Esophagus muscularis mucosa (tissue), 4 donors: ENCODE measurements at regions of chr5 and their contacts with region 1.

Region 1: GRCh38 chr5:14144586-14145434 is 1.7 kb downstream of the TRIO start:
- DNase-seq: peak; percentile 93
- H3K4me3 ChIP-seq: peak overlapping the region; percentile 73 to 95 (median 78)
- H3K27ac ChIP-seq: peak overlapping the region; percentile 97 to 98 (median 98)
- H3K4me1 ChIP-seq: peaks cover 51 to 57% (median 55%) of the 10 kb centered on the region in 4 donors
- H3K27me3 ChIP-seq: no peaks in the 10 kb centered on the region
- CTCF ChIP-seq: peak in 1 of 3 experiments; percentile 5
- EP300 ChIP-seq: no peak
- POLR2A ChIP-seq: no peak

Region 2: DNA sequence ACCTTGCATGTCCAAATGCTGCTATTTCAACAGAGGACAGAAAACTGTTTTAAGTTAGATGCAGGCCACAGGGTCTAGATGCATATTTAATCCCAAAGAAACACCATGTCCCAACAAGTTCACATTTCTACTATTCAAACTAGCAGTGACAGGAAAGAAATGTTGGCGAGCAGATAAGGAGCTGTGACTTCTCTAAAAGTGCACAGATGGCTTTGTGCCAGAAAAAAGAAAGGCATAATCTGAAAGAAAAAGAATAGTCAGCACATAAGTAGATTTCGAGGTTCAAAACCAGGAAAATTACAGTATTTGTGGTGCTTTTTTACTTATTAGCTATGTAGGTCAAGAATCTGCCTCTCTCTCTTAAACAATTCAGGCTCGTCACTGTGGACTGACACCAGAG is 378.6 kb before region 1 on chr5:
- intact Hi-C with region 1: no loop called
- DNase-seq: no peak
- H3K4me3 ChIP-seq: no peak overlapping the region
- H3K27ac ChIP-seq: no peak overlapping the region
- H3K4me1 ChIP-seq: no peaks in the 10 kb centered on the region
- H3K27me3 ChIP-seq: no peaks in the 10 kb centered on the region
- CTCF ChIP-seq: no peak
- EP300 ChIP-seq: no peak
- POLR2A ChIP-seq: no peak

Region 3: DNA sequence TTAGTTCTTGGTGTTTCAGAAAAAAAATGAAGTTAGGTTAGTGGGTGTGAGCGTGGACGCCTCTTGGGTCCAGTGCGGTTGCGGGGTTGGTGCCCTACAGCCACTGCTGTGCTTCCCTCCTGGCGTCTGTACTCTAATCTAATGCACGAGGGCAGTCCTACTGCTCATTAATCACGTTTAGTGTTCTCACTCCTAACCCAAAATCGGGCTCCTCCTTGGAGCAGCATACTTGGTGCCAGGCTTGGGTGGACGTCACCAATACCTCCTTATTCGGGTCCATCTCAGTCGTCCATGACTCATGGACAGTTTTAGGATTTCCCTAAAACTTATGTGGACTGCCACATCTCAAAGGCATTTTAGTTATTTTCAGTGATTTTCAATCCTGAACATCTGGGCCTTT is 39.9 kb after region 1 on chr5:
- intact Hi-C with region 1: loop called (anchors 5 kb)
- DNase-seq: no peak
- H3K4me3 ChIP-seq: peak overlapping the region; percentile 40 to 49 (median 42)
- H3K27ac ChIP-seq: peak overlapping the region; percentile 89 to 92 (median 90)
- H3K4me1 ChIP-seq: peaks cover 78 to 93% (median 92%) of the 10 kb centered on the region in 4 donors
- H3K27me3 ChIP-seq: no peaks in the 10 kb centered on the region
- CTCF ChIP-seq: no peak
- EP300 ChIP-seq: no peak
- POLR2A ChIP-seq: no peak

Region 4: DNA sequence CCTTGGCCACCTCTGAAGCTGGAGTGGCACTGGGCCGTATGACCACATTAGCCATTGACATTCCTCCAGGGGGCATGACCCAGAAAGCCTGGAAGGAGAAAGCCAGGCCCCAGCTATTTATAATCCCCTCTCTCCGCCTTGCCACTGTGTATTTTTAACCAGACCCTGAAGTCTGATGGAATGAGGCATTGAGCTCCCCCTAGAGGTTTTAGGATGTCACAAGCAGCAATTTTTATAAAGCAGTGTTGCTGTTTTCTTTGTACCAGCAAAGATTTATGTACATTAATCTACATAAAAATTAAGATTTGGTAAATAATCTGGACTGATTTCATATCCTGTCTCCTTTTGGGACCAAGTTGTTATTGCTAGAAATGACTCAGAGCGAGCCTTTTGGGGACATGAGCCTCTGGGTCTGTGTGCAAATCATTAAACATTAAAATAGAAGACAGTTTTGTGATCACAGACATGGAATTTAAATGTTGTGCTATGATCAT is 125.4 kb after region 1 on chr5:
- intact Hi-C with region 1: loop called (anchors 2 kb)
- DNase-seq: no peak
- H3K4me3 ChIP-seq: no peak overlapping the region
- H3K27ac ChIP-seq: peak overlapping the region; percentile 70 to 76 (median 74)
- H3K4me1 ChIP-seq: peaks cover 51 to 68% (median 54%) of the 10 kb centered on the region in 4 donors
- H3K27me3 ChIP-seq: no peaks in the 10 kb centered on the region
- CTCF ChIP-seq: peak; percentile 82
- EP300 ChIP-seq: no peak
- POLR2A ChIP-seq: no peak

Region 5: DNA sequence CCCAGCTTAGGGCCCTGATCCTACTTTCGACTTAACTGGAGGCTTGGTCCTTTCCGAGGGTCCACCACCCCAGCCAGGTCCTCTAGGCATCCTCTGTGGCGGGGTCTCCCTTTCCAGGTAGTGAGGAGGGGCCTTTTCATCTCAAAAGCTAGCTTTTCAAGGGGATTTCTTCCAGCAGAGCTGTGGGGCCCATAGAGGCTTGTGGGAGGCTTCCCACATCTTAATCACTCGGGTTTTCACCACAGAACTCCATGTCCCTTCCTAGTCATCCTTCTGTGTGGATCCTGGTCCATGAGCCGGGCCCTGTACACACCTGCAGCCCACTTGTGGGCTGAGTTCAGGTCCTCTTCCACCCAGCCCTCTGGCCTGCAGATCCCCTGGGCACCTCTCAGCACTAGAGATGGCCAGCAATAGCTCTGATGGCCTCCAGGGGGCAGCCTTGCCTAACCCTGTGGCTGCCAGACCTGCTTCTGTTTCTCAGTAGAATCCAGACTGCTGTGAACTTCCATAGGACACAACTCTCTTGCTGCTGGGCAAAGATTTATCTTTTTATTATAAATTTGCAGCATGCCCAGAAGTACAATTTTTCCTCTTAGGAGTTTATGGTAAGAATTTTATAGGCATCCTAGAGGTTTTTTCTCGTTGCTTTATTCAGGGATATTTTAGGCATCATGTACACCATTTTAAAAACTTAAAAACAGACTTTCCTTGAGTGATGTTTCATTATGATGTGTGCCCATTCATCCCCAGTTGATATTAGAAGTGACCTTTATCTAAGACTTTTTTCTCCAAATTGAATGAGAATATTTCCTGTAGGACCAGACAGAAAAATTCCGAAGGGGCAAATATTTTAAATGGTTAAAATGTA is 207.3 kb after region 1 on chr5:
- intact Hi-C with region 1: no loop called
- DNase-seq: no peak
- H3K4me3 ChIP-seq: no peak overlapping the region
- H3K27ac ChIP-seq: no peak overlapping the region
- H3K4me1 ChIP-seq: peaks cover 19 to 67% (median 54%) of the 10 kb centered on the region in 4 donors
- H3K27me3 ChIP-seq: no peaks in the 10 kb centered on the region
- CTCF ChIP-seq: peak in 2 of 3 experiments; percentile 85 to 91
- EP300 ChIP-seq: no peak
- POLR2A ChIP-seq: no peak